ENCODE measurements at regions of chr5 and their contacts with region 1.

Region 1: GRCh38 chr5:94524841-94525697 is 93.3 kb downstream of the KIAA0825 start:
- DNase-seq: no peak
- ATAC-seq: no peak
- H3K4me3 ChIP-seq: no peak overlapping the region
- H3K27ac ChIP-seq: no peak overlapping the region
- H3K4me1 ChIP-seq: no peaks in the 10 kb centered on the region
- H3K27me3 ChIP-seq: no peaks in the 10 kb centered on the region
- CTCF ChIP-seq: peak in 3 of 5 experiments; percentile 27 to 41 (median 41)
- POLR2A ChIP-seq: no peak

Region 2: DNA sequence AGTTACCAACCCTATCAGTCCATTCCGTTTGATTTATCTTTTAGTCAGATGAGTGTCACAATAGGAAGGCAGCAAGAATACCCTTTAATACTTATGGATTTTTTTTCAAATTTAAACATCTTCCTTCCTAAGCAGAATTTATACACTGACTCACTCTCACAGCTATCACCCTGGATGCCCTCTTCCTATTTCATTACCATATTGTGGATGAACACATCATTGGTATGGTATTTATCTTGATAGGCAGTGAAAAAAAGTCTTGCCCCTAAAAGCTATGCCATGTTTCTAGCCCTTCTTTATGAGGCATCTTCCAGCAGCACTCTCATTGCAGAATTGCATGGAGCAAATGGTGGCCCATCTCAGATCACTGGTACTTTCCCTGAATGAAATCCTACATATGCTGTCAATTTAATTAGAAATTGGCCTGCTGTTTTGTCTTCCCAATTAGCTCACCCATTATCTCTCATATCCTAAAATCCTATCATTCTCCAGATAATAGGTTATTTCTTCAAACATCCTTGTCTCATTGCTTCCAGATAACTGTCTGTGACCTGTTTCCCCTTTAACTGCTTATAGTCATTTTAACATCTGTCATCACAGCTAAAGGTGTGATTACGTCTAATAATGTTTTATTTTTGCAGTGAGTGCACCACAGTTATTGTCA is 350.2 kb before region 1 on chr5:
- in situ Hi-C with region 1: no loop called
- intact Hi-C with region 1: loop called (anchors 10 kb)
- DNase-seq: no peak
- ATAC-seq: no peak
- H3K4me3 ChIP-seq: no peak overlapping the region
- H3K27ac ChIP-seq: no peak overlapping the region
- H3K4me1 ChIP-seq: no peaks in the 10 kb centered on the region
- H3K27me3 ChIP-seq: no peaks in the 10 kb centered on the region
- CTCF ChIP-seq: no peak
- POLR2A ChIP-seq: no peak

Region 3: GRCh38 chr5:94337617-94338016 is 187.5 kb before region 1 on chr5:
- in situ Hi-C with region 1: no loop called
- intact Hi-C with region 1: no loop called
- DNase-seq: no peak
- ATAC-seq: no peak
- H3K4me3 ChIP-seq: no peak overlapping the region
- H3K27ac ChIP-seq: no peak overlapping the region
- H3K4me1 ChIP-seq: no peaks in the 10 kb centered on the region
- H3K27me3 ChIP-seq: no peaks in the 10 kb centered on the region
- CTCF ChIP-seq: no peak
- POLR2A ChIP-seq: no peak

Region 4: DNA sequence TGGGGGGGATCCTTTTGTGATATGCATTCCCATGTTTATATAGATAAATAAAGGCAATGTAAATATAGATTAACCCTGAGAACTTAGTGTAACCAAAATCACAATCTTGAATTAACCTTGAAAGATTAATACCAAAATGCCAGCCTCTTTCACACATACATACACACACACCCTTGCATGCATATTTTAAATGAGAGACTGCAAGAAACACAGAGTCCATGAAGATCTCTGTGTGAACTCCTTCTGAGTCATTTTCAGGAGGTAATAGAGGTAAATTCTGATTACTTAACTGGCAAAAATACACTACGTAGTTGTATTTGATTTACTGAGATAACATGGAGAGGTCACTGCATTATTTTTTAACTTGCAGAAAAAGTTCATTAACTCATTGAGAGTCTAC is 211.4 kb after region 1 on chr5:
- in situ Hi-C with region 1: no loop called
- intact Hi-C with region 1: loop called (anchors 5 kb)
- DNase-seq: no peak
- ATAC-seq: no peak
- H3K4me3 ChIP-seq: no peak overlapping the region
- H3K27ac ChIP-seq: no peak overlapping the region
- H3K4me1 ChIP-seq: no peaks in the 10 kb centered on the region
- H3K27me3 ChIP-seq: no peaks in the 10 kb centered on the region
- CTCF ChIP-seq: no peak
- POLR2A ChIP-seq: no peak